IMR-90 (cell line): ENCODE measurements at regions of chr20 and their contacts with region 1.

Region 1: GRCh38 chr20:6575912-6576401 is 191.5 kb upstream of the BMP2 start:
- DNase-seq: peak; percentile 72
- ATAC-seq: peak; percentile 86
- H3K4me3 ChIP-seq: no peak overlapping the region
- H3K27ac ChIP-seq: peak overlapping the region; percentile 68
- H3K4me1 ChIP-seq: peaks cover 13% of the 10 kb centered on the region
- H3K27me3 ChIP-seq: no peaks in the 10 kb centered on the region
- CTCF ChIP-seq: no peak
- POLR2A ChIP-seq: no peak
- RAD21 ChIP-seq: no peak

Region 2: GRCh38 chr20:6466075-6466810 is 109.7 kb before region 1 on chr20:
- CTCF ChIA-PET with region 1: no interaction called
- POLR2A ChIA-PET with region 1: no interaction called
- dilution Hi-C with region 1: no loop called
- in situ Hi-C with region 1: no loop called
- intact Hi-C with region 1: loop called (anchors 5 kb)
- DNase-seq: peak; percentile 45
- ATAC-seq: peak; percentile 87
- H3K4me3 ChIP-seq: no peak overlapping the region
- H3K27ac ChIP-seq: peak overlapping the region; percentile 63; the same call in 1 of the 2 replicates
- H3K4me1 ChIP-seq: peaks cover 9% of the 10 kb centered on the region
- H3K27me3 ChIP-seq: no peaks in the 10 kb centered on the region
- CTCF ChIP-seq: no peak
- POLR2A ChIP-seq: no peak
- RAD21 ChIP-seq: no peak

Region 3: DNA sequence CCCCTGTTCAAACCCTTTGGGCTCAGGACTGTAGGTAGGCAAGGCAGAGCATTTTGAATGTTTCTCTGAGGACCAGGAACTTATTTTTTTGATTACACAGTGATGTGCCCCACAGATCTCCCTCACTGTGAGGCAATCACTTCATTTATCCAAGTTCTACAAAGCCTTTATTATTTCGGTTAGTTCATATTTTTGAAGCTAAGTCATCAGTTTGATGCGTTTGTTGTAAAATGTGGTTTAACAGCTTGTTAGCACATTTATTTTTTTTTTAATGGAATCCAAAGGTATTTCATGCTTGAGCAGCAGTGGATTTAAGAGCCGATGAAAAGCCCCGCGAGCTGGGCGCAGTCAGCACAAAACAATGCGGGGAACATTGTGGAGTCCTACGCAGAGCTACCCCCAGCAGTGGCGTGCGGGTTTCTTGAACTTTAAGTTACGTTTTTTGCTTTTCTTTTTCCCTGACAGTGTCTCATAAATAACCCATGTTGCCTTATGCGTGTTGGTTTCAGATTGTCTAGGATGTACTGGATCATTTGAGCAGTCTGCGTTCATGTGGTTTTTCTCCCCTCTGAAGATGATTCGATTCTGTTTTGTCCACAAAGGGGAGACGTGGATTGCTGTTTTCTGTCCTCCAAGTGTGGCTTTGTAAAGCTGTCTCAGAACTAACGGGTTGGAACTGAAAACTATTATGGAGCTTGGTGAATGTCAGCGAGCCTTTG is 42.0 kb before region 1 on chr20:
- CTCF ChIA-PET with region 1: no interaction called
- POLR2A ChIA-PET with region 1: no interaction called
- dilution Hi-C with region 1: no loop called
- in situ Hi-C with region 1: no loop called
- intact Hi-C with region 1: loop called (anchors 5 kb)
- DNase-seq: peak; percentile 88
- ATAC-seq: peak; percentile 85
- H3K4me3 ChIP-seq: peak overlapping the region; percentile 51
- H3K27ac ChIP-seq: peak overlapping the region; percentile 90
- H3K4me1 ChIP-seq: peaks cover 7% of the 10 kb centered on the region
- H3K27me3 ChIP-seq: no peaks in the 10 kb centered on the region
- CTCF ChIP-seq: 0 out of 2 replicates have a peak, but pooled peaks have one; percentile 3
- POLR2A ChIP-seq: no peak
- RAD21 ChIP-seq: peak; percentile 13; the same call in 1 of the 2 replicates